ENCODE measurements at regions of chr3 and their contacts with region 1.

Region 1: GRCh38 chr3:49053543-49053942 is 24.3 kb upstream of the IMPDH2 start:
- DNase-seq: no peak
- ATAC-seq: no peak
- H3K4me3 ChIP-seq: no peak overlapping the region
- H3K4me3 Mint-ChIP-seq: no peak overlapping the region
- H3K27ac ChIP-seq: no peak overlapping the region
- H3K27ac Mint-ChIP-seq: no peak overlapping the region
- H3K4me1 ChIP-seq: no peaks in the 10 kb centered on the region
- H3K4me1 Mint-ChIP-seq: peaks cover 28% of the 10 kb centered on the region
- H3K27me3 ChIP-seq: no peaks in the 10 kb centered on the region
- H3K27me3 Mint-ChIP-seq: no peaks in the 10 kb centered on the region
- CTCF ChIP-seq: no peak

Region 2: DNA sequence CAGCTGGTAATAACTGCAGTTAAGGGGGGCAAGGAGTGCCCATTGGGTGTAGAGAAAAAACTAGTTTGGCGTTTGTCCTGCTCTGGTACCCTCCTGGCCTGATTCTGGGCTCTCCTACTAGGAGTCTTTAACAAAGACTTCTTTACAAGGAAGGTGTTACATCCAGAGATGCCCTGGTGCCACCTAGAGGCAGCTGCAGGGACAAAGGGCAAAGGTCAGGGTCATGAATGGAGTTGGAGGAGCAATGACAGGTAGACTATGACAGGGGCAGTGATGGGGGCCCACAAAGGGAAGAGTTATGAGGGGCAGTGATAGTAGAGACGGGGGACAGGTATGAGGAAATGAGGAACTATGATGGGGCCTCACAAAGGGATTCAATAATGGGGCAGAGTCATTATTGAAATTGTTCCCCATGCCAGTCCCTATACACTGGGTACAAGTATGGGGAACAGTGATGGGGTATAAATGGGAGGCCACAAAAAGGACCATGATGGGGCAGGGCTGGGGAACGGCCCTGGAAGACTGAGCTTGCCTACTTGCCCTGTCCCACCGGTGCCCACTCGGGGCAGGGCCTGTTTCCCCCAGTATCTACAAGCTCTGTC is 104.7 kb after region 1 on chr3:
- CTCF ChIA-PET with region 1: interaction called, 5 read pairs
- POLR2A ChIA-PET with region 1: no interaction called
- intact Hi-C with region 1: loop called in 1 of 2 experiments (anchors 5 kb)
- DNase-seq: peak; percentile 36 to 77 (median 65)
- ATAC-seq: peak; percentile 98
- H3K4me3 ChIP-seq: no peak overlapping the region
- H3K4me3 Mint-ChIP-seq: no peak overlapping the region
- H3K27ac ChIP-seq: no peak overlapping the region
- H3K27ac Mint-ChIP-seq: peak overlapping the region; percentile 85
- H3K4me1 ChIP-seq: no peaks in the 10 kb centered on the region
- H3K4me1 Mint-ChIP-seq: peaks cover 5% of the 10 kb centered on the region
- H3K27me3 ChIP-seq: no peaks in the 10 kb centered on the region
- H3K27me3 Mint-ChIP-seq: no peaks in the 10 kb centered on the region
- CTCF ChIP-seq: peak; percentile 61

Region 3: DNA sequence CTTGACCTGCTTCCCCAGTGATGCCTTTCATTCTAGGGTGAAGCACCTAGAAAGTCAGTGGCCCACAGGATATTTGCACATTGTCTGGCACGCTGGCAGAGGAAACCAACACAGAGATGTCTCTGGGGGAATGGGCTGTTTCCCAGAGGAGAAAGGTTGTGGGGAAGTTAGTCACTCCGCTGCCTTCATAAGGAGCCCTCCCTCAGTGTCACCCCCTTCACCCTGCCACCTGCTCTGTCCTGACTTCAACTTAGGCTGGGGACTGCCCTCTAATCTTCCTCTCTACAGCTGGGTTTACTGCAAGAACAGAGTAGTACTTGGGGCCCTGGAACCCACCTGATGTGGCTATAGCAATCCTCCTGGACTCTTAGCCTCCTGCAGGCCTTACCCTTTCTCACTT is 123.5 kb after region 1 on chr3:
- CTCF ChIA-PET with region 1: no interaction called
- POLR2A ChIA-PET with region 1: no interaction called
- intact Hi-C with region 1: no loop called
- DNase-seq: no peak
- ATAC-seq: no peak
- H3K4me3 ChIP-seq: no peak overlapping the region
- H3K4me3 Mint-ChIP-seq: no peak overlapping the region
- H3K27ac ChIP-seq: no peak overlapping the region
- H3K27ac Mint-ChIP-seq: no peak overlapping the region
- H3K4me1 ChIP-seq: peaks cover 4% of the 10 kb centered on the region
- H3K4me1 Mint-ChIP-seq: peaks cover 8% of the 10 kb centered on the region
- H3K27me3 ChIP-seq: no peaks in the 10 kb centered on the region
- H3K27me3 Mint-ChIP-seq: peaks cover 10% of the 10 kb centered on the region
- CTCF ChIP-seq: no peak